ENCODE measurements at regions of chr3 and their contacts with region 1.

Region 1: GRCh38 chr3:80190051-80190450 is 422.3 kb upstream of the ROBO1 start:
- DNase-seq: peak; percentile 99
- H3K4me3 ChIP-seq: peak overlapping the region in 1 of 3 experiments; percentile 30
- H3K27ac ChIP-seq: peak overlapping the region; percentile 94
- H3K4me1 ChIP-seq: peaks cover 46% of the 10 kb centered on the region
- H3K27me3 ChIP-seq: no peaks in the 10 kb centered on the region
- CTCF ChIP-seq: no peak
- POLR2A ChIP-seq: peak; percentile 36

Region 2: GRCh38 chr3:79846148-79846933 is 343.7 kb before region 1 on chr3:
- CTCF ChIA-PET with region 1: no interaction called
- POLR2A ChIA-PET with region 1: no interaction called
- dilution Hi-C with region 1: no loop called
- intact Hi-C with region 1: loop called (anchors 1 kb)
- DNase-seq: no peak
- H3K4me3 ChIP-seq: no peak overlapping the region
- H3K27ac ChIP-seq: no peak overlapping the region
- H3K4me1 ChIP-seq: peaks cover 22% of the 10 kb centered on the region
- H3K27me3 ChIP-seq: no peaks in the 10 kb centered on the region
- CTCF ChIP-seq: peak; percentile 17 to 18
- POLR2A ChIP-seq: no peak

Region 3: GRCh38 chr3:80000039-80000438 is 190.0 kb before region 1 on chr3:
- CTCF ChIA-PET with region 1: no interaction called
- POLR2A ChIA-PET with region 1: no interaction called
- dilution Hi-C with region 1: no loop called
- intact Hi-C with region 1: loop called (anchors 5 kb)
- DNase-seq: peak; percentile 56
- H3K4me3 ChIP-seq: no peak overlapping the region
- H3K27ac ChIP-seq: no peak overlapping the region
- H3K4me1 ChIP-seq: peaks cover 15% of the 10 kb centered on the region
- H3K27me3 ChIP-seq: no peaks in the 10 kb centered on the region
- CTCF ChIP-seq: no peak
- POLR2A ChIP-seq: no peak

Region 4: GRCh38 chr3:80087767-80088166 is 102.3 kb before region 1 on chr3:
- CTCF ChIA-PET with region 1: no interaction called
- POLR2A ChIA-PET with region 1: no interaction called
- dilution Hi-C with region 1: no loop called
- intact Hi-C with region 1: loop called (anchors 5 kb)
- DNase-seq: peak; percentile 37
- H3K4me3 ChIP-seq: no peak overlapping the region
- H3K27ac ChIP-seq: peak overlapping the region; percentile 15
- H3K4me1 ChIP-seq: peaks cover 8% of the 10 kb centered on the region
- H3K27me3 ChIP-seq: no peaks in the 10 kb centered on the region
- CTCF ChIP-seq: no peak
- POLR2A ChIP-seq: no peak

Region 5: DNA sequence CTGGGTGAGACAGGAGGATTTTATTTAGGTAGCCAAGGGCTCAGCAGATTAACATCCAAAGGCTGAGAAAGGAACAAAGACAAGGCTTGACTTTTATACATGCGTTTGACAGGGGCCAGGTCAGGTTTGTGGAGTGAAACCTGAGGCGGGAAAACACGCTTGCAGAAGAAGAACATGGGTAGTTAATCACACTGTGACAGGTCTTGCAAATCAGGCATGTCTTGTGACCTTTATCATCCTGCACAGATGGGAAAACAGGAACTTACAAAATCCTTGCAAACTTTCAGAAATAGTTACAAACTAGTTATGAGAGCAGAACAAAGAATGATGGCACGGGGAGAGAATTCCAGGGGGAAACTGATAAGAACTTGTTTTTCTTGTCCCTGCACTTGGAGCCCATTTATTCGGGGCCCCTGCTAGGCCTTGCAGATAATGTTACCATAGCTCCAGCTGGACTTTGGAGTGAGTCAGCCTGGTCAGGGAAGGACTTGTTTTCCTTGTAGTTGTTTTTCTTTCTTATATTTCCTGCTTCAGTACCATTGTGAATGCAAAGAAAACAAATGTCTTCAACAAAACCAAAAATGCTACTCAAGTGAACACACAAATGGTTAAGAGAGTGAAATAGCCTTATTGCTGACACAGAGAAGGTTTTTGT is 543.6 kb after region 1 on chr3:
- CTCF ChIA-PET with region 1: no interaction called
- POLR2A ChIA-PET with region 1: no interaction called
- dilution Hi-C with region 1: no loop called
- intact Hi-C with region 1: loop called (anchors 1 kb)
- DNase-seq: peak; percentile 100
- H3K4me3 ChIP-seq: peak overlapping the region in 1 of 3 experiments; percentile 5
- H3K27ac ChIP-seq: peak overlapping the region; percentile 98
- H3K4me1 ChIP-seq: peaks cover 47% of the 10 kb centered on the region
- H3K27me3 ChIP-seq: no peaks in the 10 kb centered on the region
- CTCF ChIP-seq: no peak
- POLR2A ChIP-seq: peak; percentile 82

Measured in endothelial cell of umbilical vein (primary cell).